ENCODE measurements at regions of chr22 and their contacts with region 1.

Region 1: GRCh38 chr22:36277482-36278291 is 24.8 kb downstream of the APOL1 start:
- DNase-seq: peak; percentile 53 to 75 (median 59)
- H3K4me3 ChIP-seq: no peak overlapping the region
- H3K4me3 Mint-ChIP-seq: peak overlapping the region in 1 of 8 donors; percentile 59
- H3K27ac ChIP-seq: no peak overlapping the region
- H3K27ac Mint-ChIP-seq: peak overlapping the region in 6 of 7 donors; percentile 50 to 88 (median 79)
- H3K4me1 ChIP-seq: peaks cover 15% of the 10 kb centered on the region
- H3K4me1 Mint-ChIP-seq: peaks cover 12 to 25% (median 17%) of the 10 kb centered on the region in 4 donors
- H3K27me3 ChIP-seq: no peaks in the 10 kb centered on the region
- H3K27me3 Mint-ChIP-seq: no peaks in the 10 kb centered on the region

Region 2: DNA sequence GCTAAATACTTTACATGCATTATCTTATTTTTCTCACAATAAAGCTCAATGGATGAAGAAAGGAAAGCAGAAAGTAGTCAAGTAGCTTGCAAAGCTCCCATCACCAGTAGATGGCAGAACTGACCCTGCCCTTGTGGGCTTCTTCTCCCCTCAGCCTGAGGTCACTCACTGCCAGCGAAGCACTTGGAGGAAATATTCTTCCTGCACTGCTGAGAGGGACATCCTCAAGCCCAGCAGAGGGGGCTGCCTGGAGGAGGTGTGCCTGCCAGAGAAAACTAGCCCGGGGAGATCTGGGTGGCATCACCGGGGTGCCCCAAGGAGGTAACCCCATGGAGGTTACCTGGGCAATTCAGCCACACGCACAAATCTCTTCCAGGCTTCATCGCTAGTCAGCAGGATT is 82.7 kb before region 1 on chr22:
- CTCF ChIA-PET with region 1: interaction called, 11 read pairs
- POLR2A ChIA-PET with region 1: no interaction called
- intact Hi-C with region 1: loop called (anchors 2 kb)
- DNase-seq: peak in 4 of 5 donors; percentile 28 to 32 (median 30)
- H3K4me3 ChIP-seq: no peak overlapping the region
- H3K4me3 Mint-ChIP-seq: no peak overlapping the region
- H3K27ac ChIP-seq: no peak overlapping the region
- H3K27ac Mint-ChIP-seq: no peak overlapping the region
- H3K4me1 ChIP-seq: no peaks in the 10 kb centered on the region
- H3K4me1 Mint-ChIP-seq: peaks cover 2 to 22% (median 6%) of the 10 kb centered on the region in 4 donors
- H3K27me3 ChIP-seq: no peaks in the 10 kb centered on the region
- H3K27me3 Mint-ChIP-seq: peaks cover 4 to 8% of the 10 kb centered on the region in 2 donors

Region 3: GRCh38 chr22:36252754-36253517 is 24.8 kb before region 1 on chr22 and contains the start of gene APOL1:
- CTCF ChIA-PET with region 1: interaction called, 17 read pairs
- POLR2A ChIA-PET with region 1: interaction called, 7 read pairs
- intact Hi-C with region 1: no loop called
- DNase-seq: peak; percentile 59 to 70 (median 64)
- H3K4me3 ChIP-seq: peak within 1 kb of the TSS; percentile 36 to 56
- H3K4me3 Mint-ChIP-seq: peak within 1 kb of the TSS; percentile 95 to 99 (median 97)
- H3K27ac ChIP-seq: peak within 1 kb of the TSS; percentile 73
- H3K27ac Mint-ChIP-seq: peak within 1 kb of the TSS; percentile 85 to 97 (median 95)
- H3K4me1 ChIP-seq: peaks cover 38% of the 10 kb centered on the region
- H3K4me1 Mint-ChIP-seq: peaks cover 30 to 65% (median 42%) of the 10 kb centered on the region in 4 donors
- H3K27me3 ChIP-seq: no peaks in the 10 kb centered on the region
- H3K27me3 Mint-ChIP-seq: no peaks in the 10 kb centered on the region
- total RNA-seq, gene APOL1: 27.5 to 31.2 TPM

Region 4: GRCh38 chr22:36258701-36259614 is 18.7 kb before region 1 on chr22:
- CTCF ChIA-PET with region 1: interaction called, 17 read pairs
- POLR2A ChIA-PET with region 1: interaction called, 7 read pairs
- intact Hi-C with region 1: no loop called
- DNase-seq: no peak
- H3K4me3 ChIP-seq: no peak overlapping the region
- H3K4me3 Mint-ChIP-seq: peak overlapping the region in 7 of 8 donors; percentile 50 to 81 (median 77)
- H3K27ac ChIP-seq: peak overlapping the region; percentile 33
- H3K27ac Mint-ChIP-seq: peak overlapping the region; percentile 83 to 96 (median 89)
- H3K4me1 ChIP-seq: peaks cover 42% of the 10 kb centered on the region
- H3K4me1 Mint-ChIP-seq: peaks cover 32 to 56% (median 41%) of the 10 kb centered on the region in 4 donors
- H3K27me3 ChIP-seq: no peaks in the 10 kb centered on the region
- H3K27me3 Mint-ChIP-seq: no peaks in the 10 kb centered on the region

Region 5: DNA sequence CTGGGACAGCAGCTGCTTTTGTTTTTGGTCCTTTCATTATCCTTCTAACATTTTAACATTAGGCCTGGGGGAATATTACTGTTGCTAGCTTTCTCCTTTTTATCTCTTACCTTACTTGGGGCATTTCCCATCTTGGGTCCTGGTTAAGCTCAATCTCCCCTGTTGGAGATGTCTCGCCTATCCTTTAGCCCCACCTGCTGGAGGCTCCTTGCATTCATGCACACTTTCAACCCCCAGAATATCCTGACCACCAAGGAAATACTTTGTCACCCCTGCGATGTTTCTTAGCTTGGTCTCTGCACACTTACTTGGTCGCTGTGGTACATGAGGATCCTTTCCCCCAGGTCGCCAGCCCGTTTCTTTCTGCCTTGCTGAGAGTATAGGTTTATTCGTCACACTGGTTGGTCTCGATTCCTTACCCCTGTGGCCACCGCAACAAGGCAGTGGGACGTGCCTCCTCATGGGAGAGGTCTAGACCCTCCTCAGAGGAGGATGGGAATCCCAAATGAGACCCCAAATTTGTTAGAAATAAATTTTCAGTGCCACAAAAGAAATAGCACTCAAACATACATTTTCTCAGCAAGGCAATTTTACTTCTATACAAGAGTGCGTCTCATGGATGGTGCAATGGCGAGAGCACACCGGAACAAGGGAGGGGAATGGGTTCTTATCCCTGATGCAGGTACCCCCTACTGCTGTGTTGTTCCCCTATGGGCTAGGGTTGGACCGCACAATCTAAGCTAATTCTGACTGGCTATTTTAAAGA is 209.1 kb after region 1 on chr22:
- CTCF ChIA-PET with region 1: interaction called, 11 read pairs
- POLR2A ChIA-PET with region 1: interaction called, 3 read pairs
- intact Hi-C with region 1: no loop called
- DNase-seq: peak; percentile 61 to 72 (median 63)
- H3K4me3 ChIP-seq: no peak overlapping the region
- H3K4me3 Mint-ChIP-seq: no peak overlapping the region
- H3K27ac ChIP-seq: no peak overlapping the region
- H3K27ac Mint-ChIP-seq: peak overlapping the region in 3 of 7 donors; percentile 43 to 65 (median 64)
- H3K4me1 ChIP-seq: peaks cover 5% of the 10 kb centered on the region
- H3K4me1 Mint-ChIP-seq: peaks cover 4 to 12% (median 5%) of the 10 kb centered on the region in 4 donors
- H3K27me3 ChIP-seq: no peaks in the 10 kb centered on the region
- H3K27me3 Mint-ChIP-seq: no peaks in the 10 kb centered on the region

Measured in CD4-positive, alpha-beta memory T cell (primary cell).